ENCODE measurements at regions of chr15 and their contacts with region 1.

Region 1: GRCh38 chr15:51380999-51381795 is 39.7 kb downstream of the GLDN start:
- DNase-seq: peak; percentile 43 to 46
- ATAC-seq: peak; percentile 93

Region 2: DNA sequence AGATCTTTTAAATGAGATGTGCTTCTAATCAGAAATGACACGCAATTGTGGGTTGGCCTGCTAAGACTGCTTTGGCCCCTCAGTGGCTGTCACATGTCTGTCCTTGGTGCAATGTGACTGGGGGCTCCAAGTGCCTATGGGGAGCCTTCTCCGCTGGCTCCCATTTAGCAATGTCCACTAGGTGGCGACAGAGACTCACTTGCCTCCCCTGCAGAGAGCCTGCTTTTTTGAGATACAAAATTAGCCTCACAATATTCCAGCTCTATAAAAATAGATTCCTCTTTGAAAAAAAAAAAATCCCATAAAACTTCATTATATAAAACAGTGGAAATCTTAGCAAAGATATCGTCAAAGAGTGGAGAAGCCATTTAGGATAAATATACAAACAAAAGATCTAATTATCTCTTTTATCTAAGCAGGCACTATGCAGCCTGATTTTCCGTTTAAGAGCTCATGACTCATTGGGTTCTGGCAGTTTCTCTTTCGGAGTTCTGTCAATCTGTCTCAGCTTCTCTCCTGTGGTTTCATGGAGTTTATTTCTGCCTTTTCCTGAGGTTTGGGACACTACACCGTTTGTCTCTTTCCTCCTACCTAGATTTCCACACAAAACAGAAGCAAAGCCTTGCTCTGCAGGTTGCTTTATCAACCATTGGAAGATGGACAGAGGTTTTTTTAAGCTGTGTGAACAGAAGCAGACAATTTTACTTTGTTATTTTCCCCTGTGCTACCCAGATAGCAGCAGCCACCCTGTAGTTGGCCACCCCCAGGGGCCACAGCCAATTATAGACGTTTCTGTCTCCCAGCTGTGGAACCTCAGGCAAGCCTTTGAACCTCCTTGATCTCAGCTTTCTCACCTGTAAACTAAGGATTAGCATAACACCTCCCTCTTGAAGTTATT is 218.1 kb before region 1 on chr15:
- intact Hi-C with region 1: loop called in 1 of 2 experiments (anchors 10 kb)
- DNase-seq: peak; percentile 48 to 69
- ATAC-seq: peak; percentile 90

Region 3: DNA sequence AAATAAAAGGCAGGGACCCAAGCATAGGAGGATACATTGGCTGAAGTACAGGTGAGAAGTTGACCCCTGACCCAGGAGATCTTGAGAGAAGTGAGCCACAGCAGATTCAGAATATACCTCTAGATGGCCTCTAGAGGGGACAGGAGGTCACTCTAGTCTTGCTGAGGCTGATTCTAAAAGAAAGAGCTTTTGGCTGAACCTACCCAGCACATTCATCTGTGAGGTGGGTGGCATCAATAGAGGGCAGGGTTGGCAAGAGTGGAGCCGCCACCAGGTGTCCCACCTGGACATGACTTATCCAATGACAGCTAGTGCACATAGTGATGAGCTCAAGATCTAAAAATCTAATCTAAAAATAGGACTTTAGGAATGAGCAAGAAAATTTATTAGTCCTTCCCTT is 94.4 kb before region 1 on chr15:
- intact Hi-C with region 1: loop called in 1 of 2 experiments (anchors 5 kb)
- DNase-seq: peak in 1 of 2 donors; percentile 28
- ATAC-seq: peak; percentile 36